ENCODE measurements at regions of chr18 and their contacts with region 1.

Region 1: GRCh38 chr18:70688286-70688685 is 399.4 kb downstream of the SOCS6 start:
- DNase-seq: no peak
- H3K4me3 ChIP-seq: no peak overlapping the region
- H3K27ac ChIP-seq: no peak overlapping the region
- H3K4me1 ChIP-seq: no peaks in the 10 kb centered on the region
- H3K27me3 ChIP-seq: no peaks in the 10 kb centered on the region
- CTCF ChIP-seq: no peak
- POLR2A ChIP-seq: no peak

Region 2: GRCh38 chr18:70645971-70646370 is 42.3 kb before region 1 on chr18:
- intact Hi-C with region 1: loop called (anchors 2 kb)
- DNase-seq: no peak
- H3K4me3 ChIP-seq: no peak overlapping the region
- H3K27ac ChIP-seq: no peak overlapping the region
- H3K4me1 ChIP-seq: no peaks in the 10 kb centered on the region
- H3K27me3 ChIP-seq: no peaks in the 10 kb centered on the region
- CTCF ChIP-seq: no peak
- POLR2A ChIP-seq: no peak